WTC11 (cell line): ENCODE measurements at regions of chr1 and their contacts with region 1.

Region 1: DNA sequence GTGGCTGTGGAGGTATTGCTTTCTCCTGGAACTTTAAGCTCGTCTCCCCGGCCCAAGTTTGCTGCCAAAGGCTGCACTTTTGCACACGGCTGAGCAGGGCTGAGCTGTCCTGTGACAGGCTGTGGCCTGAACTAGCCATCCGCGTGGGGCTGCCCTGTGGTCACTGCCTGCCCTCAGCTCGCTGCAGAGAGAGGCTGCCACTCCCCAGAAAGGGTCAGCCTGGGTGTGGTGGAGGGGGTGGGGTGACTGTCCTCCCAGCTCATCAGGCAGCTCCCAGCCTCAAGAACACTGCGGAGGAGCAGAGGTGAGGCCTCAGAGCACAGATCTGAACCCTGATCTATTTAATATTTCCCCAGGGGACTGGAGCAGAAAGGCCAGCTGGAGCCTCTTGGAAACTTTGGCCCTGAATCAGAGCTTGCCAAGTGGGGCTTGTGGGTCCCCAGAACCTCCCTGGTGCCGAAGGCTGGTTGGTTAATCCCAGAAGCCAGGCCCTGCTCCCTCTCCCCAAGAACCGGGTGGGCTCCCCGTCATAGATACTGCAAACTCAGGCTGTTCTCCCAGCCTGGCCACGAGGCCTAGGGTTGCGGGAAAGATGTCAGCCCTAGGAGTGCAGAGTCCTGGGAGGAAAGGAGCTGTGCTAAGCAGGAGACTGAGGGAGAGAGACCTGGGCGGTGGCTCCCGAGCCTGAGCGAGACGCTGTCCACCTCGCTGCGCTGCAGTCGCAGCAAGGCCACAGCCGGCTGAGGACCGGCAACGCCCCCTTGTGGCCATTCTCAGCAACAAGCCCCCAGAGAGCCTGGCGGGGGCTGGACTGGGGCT is 125.1 kb upstream of the IPO9 start:
- DNase-seq: peak; percentile 92
- ATAC-seq: peak; percentile 88
- H3K4me3 Mint-ChIP-seq: no peak overlapping the region
- H3K27ac Mint-ChIP-seq: no peak overlapping the region
- H3K4me1 Mint-ChIP-seq: peaks cover 25% of the 10 kb centered on the region
- H3K27me3 Mint-ChIP-seq: no peaks in the 10 kb centered on the region
- CTCF ChIP-seq: peak; percentile 93

Region 2: GRCh38 chr1:201530741-201531531 is 172.9 kb before region 1 on chr1:
- CTCF ChIA-PET with region 1: interaction called, 24 read pairs
- POLR2A ChIA-PET with region 1: no interaction called
- DNase-seq: peak; percentile 90
- ATAC-seq: peak; percentile 96
- H3K4me3 Mint-ChIP-seq: no peak overlapping the region
- H3K27ac Mint-ChIP-seq: 0 out of 2 replicates have a peak overlapping the region, but pooled peaks have one; percentile 50
- H3K4me1 Mint-ChIP-seq: peaks cover 23% of the 10 kb centered on the region
- H3K27me3 Mint-ChIP-seq: 0 out of 2 replicates have a peak, but pooled peaks cover under 1% of the 10 kb centered on the region
- CTCF ChIP-seq: peak; percentile 62

Region 3: GRCh38 chr1:201582705-201583442 is 121.0 kb before region 1 on chr1:
- CTCF ChIA-PET with region 1: interaction called, 10 read pairs
- POLR2A ChIA-PET with region 1: no interaction called
- DNase-seq: no peak
- ATAC-seq: peak; percentile 28
- H3K4me3 Mint-ChIP-seq: no peak overlapping the region
- H3K27ac Mint-ChIP-seq: no peak overlapping the region
- H3K4me1 Mint-ChIP-seq: peaks cover 19% of the 10 kb centered on the region
- H3K27me3 Mint-ChIP-seq: peaks cover 4% of the 10 kb centered on the region; the same call in 1 of the 2 replicates
- CTCF ChIP-seq: no peak

Region 4: DNA sequence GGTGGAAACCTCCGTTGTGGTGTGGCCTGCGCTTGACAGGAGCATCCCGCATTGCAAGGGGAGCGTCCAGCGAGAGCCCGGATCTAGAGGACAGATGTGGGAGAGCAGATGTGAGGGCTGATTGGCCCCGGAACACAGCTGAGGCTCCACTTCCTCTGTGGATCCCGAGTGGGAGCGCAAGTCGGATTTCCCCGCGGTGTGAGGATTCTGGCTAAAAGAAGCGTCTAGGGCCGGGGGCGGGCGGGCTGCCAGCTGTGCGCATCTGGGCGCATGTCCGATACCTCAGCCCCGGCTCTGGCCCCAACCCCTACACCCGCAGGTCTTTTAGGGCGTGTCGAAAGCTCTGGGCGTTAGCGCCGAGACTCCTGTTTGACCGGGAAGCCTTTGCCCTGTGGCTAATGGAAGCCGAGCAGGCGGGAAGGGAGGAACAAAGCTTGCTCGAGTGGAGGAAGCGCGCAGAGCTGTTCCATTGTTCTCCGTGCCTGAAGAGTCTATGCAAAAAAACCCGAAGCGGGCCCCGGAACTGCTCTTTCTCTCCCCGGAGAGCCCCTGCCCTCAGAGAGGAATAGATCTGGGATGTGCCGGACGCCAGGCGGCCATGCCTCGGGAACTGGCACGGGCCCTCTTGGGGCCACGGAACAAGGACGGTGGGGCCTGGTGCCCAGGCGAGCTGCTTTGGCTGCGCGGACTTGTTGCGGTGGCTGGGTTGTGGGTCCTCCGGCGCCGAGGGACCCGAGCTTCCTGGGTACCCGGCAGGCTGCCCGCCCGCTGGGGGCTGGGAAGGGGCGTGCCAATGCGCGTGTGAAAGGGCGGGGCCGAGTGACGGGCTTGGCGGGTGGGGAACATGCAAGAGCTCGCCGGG is 53.8 kb before region 1 on chr1:
- CTCF ChIA-PET with region 1: interaction called, 42 read pairs
- POLR2A ChIA-PET with region 1: no interaction called
- DNase-seq: peak; percentile 92
- ATAC-seq: peak; percentile 46
- H3K4me3 Mint-ChIP-seq: peak overlapping the region; percentile 79
- H3K27ac Mint-ChIP-seq: peak overlapping the region; percentile 82; the same call in 1 of the 2 replicates
- H3K4me1 Mint-ChIP-seq: peaks cover 55% of the 10 kb centered on the region
- H3K27me3 Mint-ChIP-seq: peaks cover 17% of the 10 kb centered on the region
- CTCF ChIP-seq: no peak

Region 5: GRCh38 chr1:201676197-201676596 is 27.6 kb before region 1 on chr1:
- CTCF ChIA-PET with region 1: interaction called, 15 read pairs
- POLR2A ChIA-PET with region 1: no interaction called
- DNase-seq: peak; percentile 50
- ATAC-seq: peak; percentile 66
- H3K4me3 Mint-ChIP-seq: peak overlapping the region; percentile 14; the same call in 1 of the 2 replicates
- H3K27ac Mint-ChIP-seq: peak overlapping the region; percentile 84
- H3K4me1 Mint-ChIP-seq: peaks cover 66% of the 10 kb centered on the region
- H3K27me3 Mint-ChIP-seq: no peaks in the 10 kb centered on the region
- CTCF ChIP-seq: no peak